ENCODE measurements at regions of chr4 and their contacts with region 1.

Region 1: DNA sequence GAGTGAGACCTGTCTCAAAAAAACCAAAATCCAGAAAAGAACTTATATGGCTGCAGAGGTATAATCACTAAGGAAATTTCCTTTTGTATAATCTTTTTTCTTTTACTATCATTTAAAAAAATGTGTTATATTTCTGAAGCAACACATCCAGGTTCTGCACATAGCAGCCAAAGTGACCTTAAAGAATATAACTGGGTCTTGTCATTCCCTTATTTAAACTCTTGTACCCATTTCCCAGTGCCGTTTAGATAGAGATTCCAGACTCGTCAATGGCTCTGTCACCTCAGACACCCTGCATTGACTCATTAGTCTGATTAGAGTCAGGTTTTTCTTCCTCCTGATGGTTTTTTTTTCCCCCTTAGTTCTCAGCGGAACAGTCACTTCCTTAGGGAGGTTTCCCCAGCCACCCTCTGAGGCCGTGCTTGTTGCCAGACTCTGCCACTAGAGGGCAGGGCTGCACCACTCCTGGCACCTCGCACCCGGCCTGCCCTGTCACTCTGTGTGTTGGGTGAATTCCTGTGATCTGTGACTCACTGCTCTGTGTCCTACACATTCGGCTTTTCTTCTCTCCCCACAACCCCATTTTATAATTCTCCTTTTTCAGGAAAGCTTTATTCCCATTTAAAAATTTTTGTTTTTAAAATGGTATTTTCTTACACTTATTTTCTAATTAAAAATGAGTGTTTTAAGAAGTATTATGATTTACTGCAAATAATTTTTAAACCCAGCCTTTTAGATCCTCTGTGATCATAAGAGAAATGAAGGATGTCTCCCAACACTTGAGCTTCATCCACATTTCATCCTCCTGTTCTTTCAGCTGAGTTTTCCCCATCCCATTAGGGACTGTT is 32.1 kb downstream of the HTT start:
- DNase-seq: peak; percentile 88
- H3K4me3 ChIP-seq: peak overlapping the region in 1 of 2 experiments; percentile 38; a peak in 1 of 4 replicates
- H3K27ac ChIP-seq: peak overlapping the region in 1 of 2 experiments; percentile 55; a peak in 2 of 4 replicates
- H3K4me1 ChIP-seq: peaks cover 3 to 18% of the 10 kb centered on the region in 2 experiments; a peak in 3 of 4 replicates
- H3K27me3 ChIP-seq: no peaks in the 10 kb centered on the region
- CTCF ChIP-seq: peak; percentile 99
- EP300 ChIP-seq: no peak
- RAD21 ChIP-seq: peak; percentile 89

Region 2: DNA sequence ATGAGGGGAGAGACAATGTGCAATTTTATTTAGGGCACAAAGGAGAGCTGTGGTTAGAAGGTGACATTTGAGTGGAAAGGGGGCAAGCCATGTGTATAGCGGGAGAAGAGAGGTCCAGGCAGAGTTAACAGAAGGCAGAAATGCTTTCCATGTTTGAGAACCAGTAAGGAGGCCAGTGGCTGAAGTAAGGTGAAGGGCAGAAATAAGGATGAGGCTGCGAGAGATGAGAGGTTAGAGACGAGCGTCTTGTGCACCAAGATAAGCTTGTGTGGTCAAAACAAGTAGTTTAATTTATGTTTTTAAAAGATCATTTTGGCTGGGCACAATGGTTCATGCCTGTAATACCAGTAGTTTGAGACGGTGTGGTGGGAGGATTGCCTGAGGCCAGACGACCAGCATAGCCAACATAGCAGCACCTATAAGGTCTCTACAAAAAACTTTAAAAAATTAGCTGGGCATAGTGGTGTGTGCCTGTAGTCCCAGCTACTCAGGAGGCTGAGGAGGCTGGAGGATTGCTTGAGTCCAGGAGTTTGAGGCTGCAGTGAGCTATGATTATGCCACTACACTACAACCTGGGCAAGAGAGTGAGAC is 23.5 kb before region 1 on chr4:
- CTCF ChIA-PET with region 1: interaction called, 11 read pairs
- POLR2A ChIA-PET with region 1: no interaction called
- DNase-seq: no peak
- H3K4me3 ChIP-seq: no peak overlapping the region
- H3K27ac ChIP-seq: no peak overlapping the region
- H3K4me1 ChIP-seq: no peaks in the 10 kb centered on the region
- H3K27me3 ChIP-seq: no peaks in the 10 kb centered on the region
- CTCF ChIP-seq: no peak
- EP300 ChIP-seq: no peak
- RAD21 ChIP-seq: no peak

Region 3: GRCh38 chr4:3096202-3096601 is 10.4 kb before region 1 on chr4:
- CTCF ChIA-PET with region 1: interaction called, 12 read pairs
- POLR2A ChIA-PET with region 1: no interaction called
- DNase-seq: no peak
- H3K4me3 ChIP-seq: no peak overlapping the region
- H3K27ac ChIP-seq: no peak overlapping the region
- H3K4me1 ChIP-seq: no peaks in the 10 kb centered on the region
- H3K27me3 ChIP-seq: no peaks in the 10 kb centered on the region
- CTCF ChIP-seq: no peak
- EP300 ChIP-seq: no peak
- RAD21 ChIP-seq: no peak

Region 4: DNA sequence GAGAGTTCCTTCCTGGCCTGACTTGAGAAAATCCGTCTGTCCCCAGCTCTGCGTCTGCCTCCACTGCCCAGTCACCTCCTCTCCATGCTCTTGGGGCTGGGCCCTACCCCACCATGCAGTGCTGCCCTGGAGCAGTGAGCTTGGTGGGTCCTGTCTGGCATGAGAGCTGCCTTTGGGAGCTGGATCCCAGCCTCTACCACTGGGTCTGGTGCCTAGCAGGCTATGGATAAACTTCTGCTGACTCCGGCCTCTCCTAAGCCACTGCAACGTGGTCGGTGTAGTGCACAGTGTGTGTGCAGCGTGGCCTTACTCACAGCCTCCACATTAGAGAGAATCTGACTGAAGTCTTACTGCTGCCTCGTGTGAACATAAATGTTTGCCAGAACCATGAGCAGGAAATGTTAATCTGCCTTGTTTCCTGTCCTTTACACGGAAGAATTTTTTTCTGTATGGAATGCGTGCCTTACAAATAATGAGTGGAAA is 15.6 kb after region 1 on chr4:
- CTCF ChIA-PET with region 1: interaction called, 17 read pairs
- POLR2A ChIA-PET with region 1: no interaction called
- DNase-seq: no peak
- H3K4me3 ChIP-seq: no peak overlapping the region
- H3K27ac ChIP-seq: peak overlapping the region in 1 of 2 experiments; percentile 27; a peak in 2 of 4 replicates
- H3K4me1 ChIP-seq: peaks cover 4 to 38% of the 10 kb centered on the region in 2 experiments
- H3K27me3 ChIP-seq: no peaks in the 10 kb centered on the region
- CTCF ChIP-seq: no peak
- EP300 ChIP-seq: no peak
- RAD21 ChIP-seq: no peak

Region 5: GRCh38 chr4:3136453-3136852 is 29.9 kb after region 1 on chr4:
- CTCF ChIA-PET with region 1: interaction called, 16 read pairs
- POLR2A ChIA-PET with region 1: no interaction called
- DNase-seq: no peak
- H3K4me3 ChIP-seq: no peak overlapping the region
- H3K27ac ChIP-seq: no peak overlapping the region
- H3K4me1 ChIP-seq: no peaks in the 10 kb centered on the region
- H3K27me3 ChIP-seq: no peaks in the 10 kb centered on the region
- CTCF ChIP-seq: peak; percentile 62
- EP300 ChIP-seq: no peak
- RAD21 ChIP-seq: peak; percentile 12; the same call in 1 of the 2 replicates

Region 6: DNA sequence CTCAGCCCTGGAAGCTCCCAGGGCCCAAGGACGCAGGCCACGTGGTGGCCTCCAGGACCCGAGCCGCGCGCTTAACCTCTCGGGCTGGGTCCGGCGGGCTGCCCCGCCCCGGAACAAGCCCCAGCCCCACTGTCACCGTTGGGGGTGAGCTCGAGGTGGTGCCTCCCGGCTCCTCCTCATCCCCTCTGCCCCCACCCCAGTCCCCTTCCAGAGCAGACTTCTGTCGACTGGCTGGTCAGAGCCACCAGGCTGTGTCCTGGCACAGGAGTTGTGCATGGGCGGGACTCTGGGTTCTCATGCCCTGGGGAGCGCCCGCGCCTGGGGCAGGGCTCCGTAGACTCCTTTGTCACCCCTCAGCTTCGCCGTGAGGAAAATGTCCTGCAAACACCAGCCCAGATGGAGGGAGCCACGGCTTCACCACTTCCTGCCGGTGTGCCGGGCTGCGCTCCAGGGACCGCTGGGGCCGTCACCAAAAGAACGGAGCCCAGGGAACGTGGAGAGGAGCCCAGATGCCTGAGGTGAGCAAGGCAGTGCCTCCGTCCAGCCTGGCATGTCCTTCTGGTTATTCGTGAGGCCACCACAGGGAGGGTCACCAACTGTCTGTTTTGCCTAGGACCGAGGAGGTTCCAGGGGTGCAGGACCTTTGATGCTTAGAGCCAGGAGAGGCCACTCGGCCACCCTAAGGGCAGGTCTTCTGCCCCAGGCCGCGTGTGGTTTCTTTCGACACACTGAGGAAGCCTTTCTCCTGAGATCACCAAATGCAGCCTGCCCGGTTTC is 179.2 kb after region 1 on chr4:
- CTCF ChIA-PET with region 1: no interaction called
- POLR2A ChIA-PET with region 1: no interaction called
- DNase-seq: peak; percentile 18
- H3K4me3 ChIP-seq: no peak overlapping the region
- H3K27ac ChIP-seq: no peak overlapping the region
- H3K4me1 ChIP-seq: no peaks in the 10 kb centered on the region; a peak in 1 of 4 replicates
- H3K27me3 ChIP-seq: no peaks in the 10 kb centered on the region
- CTCF ChIP-seq: no peak
- EP300 ChIP-seq: no peak
- RAD21 ChIP-seq: no peak

Region 7: GRCh38 chr4:3340038-3340699 is 233.6 kb after region 1 on chr4:
- CTCF ChIA-PET with region 1: no interaction called
- POLR2A ChIA-PET with region 1: no interaction called
- DNase-seq: no peak
- H3K4me3 ChIP-seq: no peak overlapping the region
- H3K27ac ChIP-seq: no peak overlapping the region
- H3K4me1 ChIP-seq: no peaks in the 10 kb centered on the region; a peak in 2 of 4 replicates
- H3K27me3 ChIP-seq: no peaks in the 10 kb centered on the region
- CTCF ChIP-seq: no peak
- EP300 ChIP-seq: no peak
- RAD21 ChIP-seq: no peak